ENCODE measurements at regions of chr7 and their contacts with region 1.

Region 1: DNA sequence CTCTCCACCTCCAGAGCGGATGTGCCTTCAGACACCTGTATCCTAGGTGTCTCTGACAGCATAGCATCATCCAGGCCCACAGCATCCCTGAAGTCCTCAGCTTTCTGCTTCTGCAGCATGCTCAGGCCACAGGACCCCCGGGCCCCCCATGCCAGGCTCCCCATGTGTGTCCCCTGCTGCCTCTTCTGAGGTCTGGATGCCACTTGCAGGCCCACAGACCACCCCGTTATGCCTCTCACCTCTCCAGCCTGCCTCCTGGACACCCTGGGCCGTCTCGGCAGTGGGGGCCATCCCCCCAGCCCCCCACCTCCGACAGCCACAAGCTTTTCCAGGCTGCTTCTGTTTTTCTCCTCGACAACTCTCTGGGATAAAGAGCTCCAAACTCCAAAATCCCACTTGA is 84.4 kb downstream of the WNT2 start:
- DNase-seq: no peak
- ATAC-seq: no peak
- H3K4me3 ChIP-seq: no peak overlapping the region
- H3K27ac ChIP-seq: no peak overlapping the region
- H3K4me1 ChIP-seq: 0 out of 2 replicates have a peak, but pooled peaks cover 3% of the 10 kb centered on the region
- H3K27me3 ChIP-seq: no peaks in the 10 kb centered on the region
- CTCF ChIP-seq: no peak
- POLR2A ChIP-seq: no peak
- RAD21 ChIP-seq: no peak

Region 2: DNA sequence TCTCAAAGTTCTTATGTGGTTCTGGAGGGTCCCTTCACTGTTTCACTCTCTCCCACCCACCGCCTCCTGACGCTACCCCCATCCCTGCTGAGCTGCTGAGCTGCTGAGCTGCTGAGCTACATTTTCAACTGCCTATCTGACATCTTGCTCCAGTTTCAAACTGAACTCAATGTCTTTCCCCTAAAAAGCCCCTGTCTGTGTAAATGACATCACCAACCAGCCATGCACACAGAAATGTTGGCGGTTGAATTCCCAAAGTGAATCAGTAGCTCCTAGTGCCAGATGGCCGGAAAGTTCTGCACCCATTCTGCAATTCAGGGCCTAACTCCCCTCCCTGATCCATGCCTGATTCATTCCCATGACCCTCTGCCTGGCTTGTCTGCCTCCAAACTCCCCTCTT is 13.2 kb after region 1 on chr7:
- CTCF ChIA-PET with region 1: no interaction called
- POLR2A ChIA-PET with region 1: interaction called, 30 read pairs
- dilution Hi-C with region 1: no loop called
- in situ Hi-C with region 1: no loop called
- intact Hi-C with region 1: no loop called
- DNase-seq: peak; percentile 91
- ATAC-seq: peak; percentile 21; the same call in 1 of the 2 replicates
- H3K4me3 ChIP-seq: no peak overlapping the region
- H3K27ac ChIP-seq: peak overlapping the region; percentile 62; the same call in 1 of the 2 replicates
- H3K4me1 ChIP-seq: peaks cover 26% of the 10 kb centered on the region
- H3K27me3 ChIP-seq: no peaks in the 10 kb centered on the region
- CTCF ChIP-seq: no peak
- POLR2A ChIP-seq: no peak
- RAD21 ChIP-seq: no peak

Region 3: GRCh38 chr7:117308891-117309290 is 70.4 kb after region 1 on chr7:
- CTCF ChIA-PET with region 1: no interaction called
- POLR2A ChIA-PET with region 1: no interaction called
- dilution Hi-C with region 1: no loop called
- in situ Hi-C with region 1: no loop called
- intact Hi-C with region 1: no loop called
- DNase-seq: no peak
- ATAC-seq: no peak
- H3K4me3 ChIP-seq: no peak overlapping the region
- H3K27ac ChIP-seq: no peak overlapping the region
- H3K4me1 ChIP-seq: peaks cover 2% of the 10 kb centered on the region; the same call in 1 of the 2 replicates
- H3K27me3 ChIP-seq: no peaks in the 10 kb centered on the region
- CTCF ChIP-seq: no peak
- POLR2A ChIP-seq: no peak
- RAD21 ChIP-seq: no peak

Region 4: GRCh38 chr7:117550625-117551024 is 312.2 kb after region 1 on chr7:
- CTCF ChIA-PET with region 1: no interaction called
- POLR2A ChIA-PET with region 1: no interaction called
- dilution Hi-C with region 1: no loop called
- in situ Hi-C with region 1: no loop called
- intact Hi-C with region 1: no loop called
- DNase-seq: no peak
- ATAC-seq: no peak
- H3K4me3 ChIP-seq: no peak overlapping the region
- H3K27ac ChIP-seq: no peak overlapping the region
- H3K4me1 ChIP-seq: no peaks in the 10 kb centered on the region
- H3K27me3 ChIP-seq: no peaks in the 10 kb centered on the region; the same call in 1 of the 2 replicates
- CTCF ChIP-seq: no peak
- POLR2A ChIP-seq: no peak
- RAD21 ChIP-seq: no peak

Region 5: DNA sequence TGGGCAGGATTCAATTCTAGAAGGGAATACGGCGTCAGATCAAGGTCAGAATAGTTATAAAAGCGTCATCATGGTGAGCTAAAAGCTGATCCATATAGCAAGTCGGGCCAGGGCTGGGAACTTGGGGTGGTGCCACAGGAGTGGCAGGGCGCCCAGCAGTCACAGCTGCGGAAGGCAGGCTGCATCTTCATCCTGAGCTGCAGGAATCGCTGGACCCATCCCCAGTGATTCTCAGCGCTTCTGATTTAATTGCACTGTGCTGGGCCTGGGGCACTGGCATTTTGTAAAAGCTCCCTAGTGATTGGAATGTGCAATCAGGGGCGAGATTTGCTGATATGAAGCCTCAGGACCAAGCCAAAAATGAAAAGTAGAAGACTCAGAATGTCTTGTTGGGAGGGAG is 499.5 kb after region 1 on chr7:
- CTCF ChIA-PET with region 1: no interaction called
- POLR2A ChIA-PET with region 1: no interaction called
- dilution Hi-C with region 1: no loop called
- in situ Hi-C with region 1: no loop called
- intact Hi-C with region 1: no loop called
- DNase-seq: no peak
- ATAC-seq: no peak
- H3K4me3 ChIP-seq: no peak overlapping the region
- H3K27ac ChIP-seq: no peak overlapping the region
- H3K4me1 ChIP-seq: peaks cover 7% of the 10 kb centered on the region
- H3K27me3 ChIP-seq: no peaks in the 10 kb centered on the region
- CTCF ChIP-seq: no peak
- POLR2A ChIP-seq: no peak
- RAD21 ChIP-seq: no peak

Measured in IMR-90 (cell line).